SK-N-SH (cell line): ENCODE measurements at regions of chr10 and their contacts with region 1.

Region 1: DNA sequence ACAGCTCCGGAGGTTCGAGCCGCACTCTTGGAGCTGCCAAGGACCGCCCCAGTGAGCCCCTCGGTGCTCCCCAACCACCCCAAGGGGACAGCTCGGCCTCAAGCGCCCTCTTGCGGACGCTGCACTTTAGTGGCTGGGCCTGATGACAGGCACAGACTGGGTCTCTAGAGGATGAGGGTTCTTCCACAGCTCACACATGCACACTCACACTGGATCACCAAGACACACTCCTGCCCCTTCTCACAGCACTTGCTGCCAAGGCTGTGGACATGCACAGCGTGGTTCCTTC is 2.1 kb downstream of the RET start:
- DNase-seq: peak; percentile 86
- H3K4me3 ChIP-seq: peak overlapping the region; percentile 53 to 61; a peak in 3 of 4 replicates
- H3K27ac ChIP-seq: peak overlapping the region in 1 of 2 experiments; percentile 96; a peak in 2 of 4 replicates
- H3K4me1 ChIP-seq: peaks cover 0 to 70% of the 10 kb centered on the region in 2 experiments; a peak in 2 of 4 replicates
- H3K27me3 ChIP-seq: peaks cover 6% of the 10 kb centered on the region
- CTCF ChIP-seq: peak; percentile 67
- EP300 ChIP-seq: no peak
- RAD21 ChIP-seq: peak; percentile 77

Region 2: DNA sequence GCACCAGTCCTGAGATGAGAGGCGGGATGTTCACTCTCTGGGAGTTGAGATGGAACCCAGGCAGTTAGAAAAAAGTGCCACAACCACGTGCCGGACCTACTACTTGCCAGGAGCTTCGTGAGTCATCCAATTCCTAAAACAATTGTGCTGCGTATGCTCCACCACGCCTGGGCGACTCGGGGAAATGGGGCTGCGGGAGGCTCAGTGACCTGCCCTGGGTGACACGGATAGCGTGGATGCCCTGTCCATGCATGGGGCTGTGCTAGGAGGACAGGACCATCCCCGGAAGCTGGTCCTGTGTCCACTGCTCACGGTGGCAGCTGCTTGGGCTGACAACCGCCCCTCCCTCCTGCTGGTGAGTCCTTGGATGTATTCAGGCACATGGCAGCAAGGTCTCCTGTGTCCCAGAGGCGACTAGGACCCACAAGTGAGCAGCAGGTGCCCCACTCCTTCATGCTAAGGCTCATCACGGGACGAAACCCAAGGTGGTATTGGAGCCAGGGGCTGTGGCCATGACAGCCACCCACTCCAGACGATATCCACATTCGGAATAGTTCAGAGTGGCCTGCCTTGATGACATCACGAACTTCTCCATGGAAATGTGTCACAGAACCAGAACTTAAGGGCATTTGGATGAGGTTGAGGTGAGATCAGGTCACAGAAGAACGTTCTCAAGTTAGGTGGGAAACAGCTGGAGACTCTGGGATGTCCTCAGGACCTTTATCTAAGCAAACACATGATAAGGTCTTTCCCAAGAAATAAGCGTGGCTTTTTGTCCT is 205.9 kb before region 1 on chr10:
- CTCF ChIA-PET with region 1: interaction called, 143 read pairs
- POLR2A ChIA-PET with region 1: interaction called, 18 read pairs
- DNase-seq: no peak
- H3K4me3 ChIP-seq: no peak overlapping the region
- H3K27ac ChIP-seq: peak overlapping the region in 1 of 2 experiments; percentile 99; a peak in 2 of 4 replicates
- H3K4me1 ChIP-seq: peaks cover 0 to 90% of the 10 kb centered on the region in 2 experiments; a peak in 2 of 4 replicates
- H3K27me3 ChIP-seq: no peaks in the 10 kb centered on the region
- CTCF ChIP-seq: no peak
- EP300 ChIP-seq: no peak
- RAD21 ChIP-seq: no peak

Region 3: DNA sequence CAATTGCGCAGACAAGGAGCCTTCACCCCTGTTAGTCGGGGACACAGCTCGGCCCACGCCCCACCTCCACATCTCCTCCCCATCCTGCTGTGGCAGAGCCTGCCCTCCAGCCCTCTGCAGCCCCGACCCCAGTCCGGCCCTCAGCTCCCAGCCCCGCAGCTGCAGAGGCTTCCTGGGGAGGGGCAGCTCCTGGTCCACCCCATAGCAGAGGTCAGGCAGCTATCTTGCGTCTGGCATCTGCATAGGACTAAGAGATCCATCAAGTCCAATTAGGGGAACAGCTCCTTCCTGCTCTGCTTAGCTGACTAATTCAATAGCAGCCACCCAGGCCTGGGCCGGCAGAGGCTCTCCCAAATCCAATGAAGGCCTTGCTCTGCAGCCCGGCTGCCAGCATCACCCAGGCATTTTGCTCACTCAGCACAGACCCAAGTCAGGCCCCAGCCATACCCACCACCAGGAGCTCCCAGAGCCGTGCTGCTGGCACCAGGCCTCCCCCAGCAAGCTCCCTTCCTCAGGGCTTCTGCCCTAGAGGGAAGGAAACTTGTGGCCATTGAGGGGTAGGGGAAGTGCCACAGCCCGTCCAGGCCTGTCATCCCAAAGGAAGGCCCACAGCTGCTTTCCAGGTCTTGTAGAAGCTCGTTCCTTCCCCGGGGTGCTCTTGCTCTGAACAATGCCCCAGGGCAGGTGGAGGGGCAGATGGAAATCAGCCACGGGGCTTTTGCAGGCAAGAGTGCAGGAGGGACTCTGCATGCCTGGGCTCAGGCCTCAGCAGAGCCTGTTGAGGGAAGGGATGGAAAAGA is 108.3 kb before region 1 on chr10:
- CTCF ChIA-PET with region 1: interaction called, 130 read pairs
- POLR2A ChIA-PET with region 1: interaction called, 75 read pairs
- DNase-seq: peak; percentile 90
- H3K4me3 ChIP-seq: no peak overlapping the region
- H3K27ac ChIP-seq: peak overlapping the region; percentile 20 to 100; a peak in 3 of 4 replicates
- H3K4me1 ChIP-seq: peaks cover 0 to 59% of the 10 kb centered on the region in 2 experiments; a peak in 2 of 4 replicates
- H3K27me3 ChIP-seq: no peaks in the 10 kb centered on the region
- CTCF ChIP-seq: no peak
- EP300 ChIP-seq: peak; percentile 35 to 100; a peak in 3 of 4 replicates
- RAD21 ChIP-seq: peak; percentile 44; the same call in 1 of the 2 replicates

Region 4: GRCh38 chr10:42981358-42982236 is 97.3 kb before region 1 on chr10:
- CTCF ChIA-PET with region 1: interaction called, 130 read pairs
- POLR2A ChIA-PET with region 1: interaction called, 14 read pairs
- DNase-seq: peak; percentile 87
- H3K4me3 ChIP-seq: no peak overlapping the region
- H3K27ac ChIP-seq: peak overlapping the region in 1 of 2 experiments; percentile 93; a peak in 2 of 4 replicates
- H3K4me1 ChIP-seq: peaks cover 0 to 65% of the 10 kb centered on the region in 2 experiments; a peak in 2 of 4 replicates
- H3K27me3 ChIP-seq: no peaks in the 10 kb centered on the region
- CTCF ChIP-seq: no peak
- EP300 ChIP-seq: peak in 1 of 2 experiments; percentile 95; a peak in 2 of 4 replicates
- RAD21 ChIP-seq: peak; percentile 21

Region 5: DNA sequence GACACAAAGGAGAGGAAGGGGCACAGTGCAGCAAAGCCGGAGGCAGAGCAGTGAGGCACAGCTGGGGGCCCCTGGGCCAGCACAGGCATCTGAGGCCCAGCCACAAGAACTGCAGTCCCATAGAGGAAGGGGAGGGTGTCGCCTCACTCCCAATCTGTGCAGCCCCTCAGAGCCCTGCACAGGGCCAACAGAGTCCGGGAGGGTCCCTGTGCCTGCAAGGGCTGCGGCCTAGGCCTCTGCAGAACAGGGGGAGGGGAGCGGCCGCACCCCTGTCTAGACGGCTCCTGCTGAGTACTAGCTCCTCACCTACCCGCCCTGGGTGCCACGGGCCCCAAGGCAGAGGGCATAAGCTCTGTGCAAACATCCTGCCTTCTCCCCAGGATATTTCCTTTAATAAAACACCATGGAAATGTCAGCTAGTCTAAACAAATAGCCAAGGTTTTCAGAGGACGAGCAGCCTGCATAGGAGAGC is 34.4 kb before region 1 on chr10:
- CTCF ChIA-PET with region 1: interaction called, 15 read pairs
- POLR2A ChIA-PET with region 1: interaction called, 8 read pairs
- DNase-seq: peak; percentile 33
- H3K4me3 ChIP-seq: no peak overlapping the region
- H3K27ac ChIP-seq: peak overlapping the region in 1 of 2 experiments; percentile 83; a peak in 2 of 4 replicates
- H3K4me1 ChIP-seq: peaks cover 0 to 85% of the 10 kb centered on the region in 2 experiments; a peak in 3 of 4 replicates
- H3K27me3 ChIP-seq: no peaks in the 10 kb centered on the region
- CTCF ChIP-seq: no peak
- EP300 ChIP-seq: no peak
- RAD21 ChIP-seq: no peak

Region 6: DNA sequence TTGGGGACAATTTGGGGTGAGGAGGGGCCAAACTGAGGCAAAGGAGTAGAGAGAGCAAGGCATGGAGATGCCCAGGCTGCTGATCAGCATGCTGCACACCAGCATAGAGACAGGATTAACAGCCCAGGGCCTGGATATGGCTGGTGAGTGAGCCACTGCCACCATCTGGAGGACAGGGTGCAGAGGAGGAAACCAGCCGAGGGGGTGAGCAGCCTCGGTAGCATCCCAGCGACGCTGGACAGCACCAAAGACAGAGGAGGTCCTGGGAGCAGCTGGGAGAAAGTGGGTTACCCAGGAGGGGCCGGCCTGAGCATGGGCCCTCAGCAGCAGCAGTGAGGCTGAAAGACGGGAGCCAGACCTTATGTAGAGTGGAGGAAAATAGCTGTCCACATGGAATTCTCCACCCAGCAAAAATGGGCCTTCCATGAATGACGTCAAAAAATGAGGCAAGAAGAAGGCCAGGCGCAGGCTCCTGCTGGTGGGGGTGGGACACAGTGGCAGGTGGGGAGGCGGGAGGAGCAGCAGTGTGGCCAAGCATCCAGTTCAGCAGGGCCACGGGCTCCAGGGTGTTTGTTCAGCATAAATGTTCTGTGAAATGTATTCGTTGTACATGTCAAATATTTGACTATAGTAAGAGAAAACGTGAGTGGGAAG is 14.6 kb after region 1 on chr10:
- CTCF ChIA-PET with region 1: interaction called, 53 read pairs
- POLR2A ChIA-PET with region 1: interaction called, 17 read pairs
- DNase-seq: peak; percentile 84
- H3K4me3 ChIP-seq: no peak overlapping the region
- H3K27ac ChIP-seq: peak overlapping the region in 1 of 2 experiments; percentile 56; a peak in 2 of 4 replicates
- H3K4me1 ChIP-seq: peaks cover 0 to 84% of the 10 kb centered on the region in 2 experiments; a peak in 2 of 4 replicates
- H3K27me3 ChIP-seq: no peaks in the 10 kb centered on the region
- CTCF ChIP-seq: no peak; the same call in 1 of the 2 replicates
- EP300 ChIP-seq: no peak
- RAD21 ChIP-seq: peak; percentile 64

Region 7: DNA sequence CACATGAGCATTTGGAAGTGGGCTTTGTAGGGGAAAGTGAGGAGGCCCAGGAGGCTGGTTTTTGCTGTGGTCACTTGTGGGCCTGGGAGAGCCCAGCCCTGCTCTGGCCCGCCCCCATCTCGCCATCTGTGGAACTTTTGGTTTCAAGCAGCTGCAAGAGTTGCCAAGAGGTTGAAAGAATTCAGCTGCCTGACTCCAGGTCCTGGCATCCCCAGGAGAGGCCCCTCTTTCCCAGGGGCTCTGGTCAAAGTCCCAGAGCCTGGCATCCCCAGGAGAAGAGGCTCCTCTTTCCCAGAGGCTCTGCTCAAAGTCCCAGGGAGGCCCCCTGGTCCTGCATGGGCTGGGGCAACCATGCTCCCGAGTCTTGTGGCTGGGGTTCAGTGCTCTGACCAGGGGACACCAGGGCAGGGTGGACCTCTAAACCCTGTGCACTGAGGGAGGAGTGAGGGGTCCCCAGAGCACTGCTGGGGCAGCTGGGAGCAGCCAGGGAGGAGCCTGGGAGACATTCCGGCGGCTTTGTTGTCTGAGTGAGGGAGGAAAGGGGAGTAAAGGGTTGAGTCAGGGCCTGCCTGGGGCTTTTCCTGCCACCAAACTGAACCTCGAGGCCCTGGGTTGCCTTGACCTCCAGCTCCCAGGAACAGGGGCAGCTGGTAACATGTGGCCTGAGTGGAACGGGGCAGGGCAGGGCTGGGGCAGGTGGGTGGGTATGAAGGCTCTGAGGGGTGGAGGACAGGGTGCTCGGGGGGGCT is 31.6 kb after region 1 on chr10:
- CTCF ChIA-PET with region 1: interaction called, 20 read pairs
- POLR2A ChIA-PET with region 1: no interaction called
- DNase-seq: no peak
- H3K4me3 ChIP-seq: no peak overlapping the region
- H3K27ac ChIP-seq: peak overlapping the region in 1 of 2 experiments; percentile 56; a peak in 1 of 4 replicates
- H3K4me1 ChIP-seq: peaks cover 0 to 35% of the 10 kb centered on the region in 2 experiments; a peak in 1 of 4 replicates
- H3K27me3 ChIP-seq: no peaks in the 10 kb centered on the region
- CTCF ChIP-seq: no peak
- EP300 ChIP-seq: no peak
- RAD21 ChIP-seq: no peak